ENCODE measurements at regions of chr3 and their contacts with region 1.

Region 1: GRCh38 chr3:152471814-152472671 is 203.3 kb downstream of the MBNL1 start:
- DNase-seq: peak; percentile 76
- H3K4me3 ChIP-seq: no peak overlapping the region
- H3K27ac ChIP-seq: peak overlapping the region; percentile 13
- H3K4me1 ChIP-seq: no peaks in the 10 kb centered on the region
- H3K27me3 ChIP-seq: no peaks in the 10 kb centered on the region
- CTCF ChIP-seq: peak; percentile 54 to 63
- POLR2A ChIP-seq: no peak

Region 2: GRCh38 chr3:152071924-152072323 is 400.1 kb before region 1 on chr3:
- CTCF ChIA-PET with region 1: interaction called, 19 read pairs
- POLR2A ChIA-PET with region 1: no interaction called
- dilution Hi-C with region 1: no loop called
- intact Hi-C with region 1: loop called (anchors 1 kb)
- DNase-seq: peak; percentile 50
- H3K4me3 ChIP-seq: no peak overlapping the region
- H3K27ac ChIP-seq: no peak overlapping the region
- H3K4me1 ChIP-seq: peaks cover 4% of the 10 kb centered on the region
- H3K27me3 ChIP-seq: no peaks in the 10 kb centered on the region
- CTCF ChIP-seq: peak; percentile 37 to 40
- POLR2A ChIP-seq: no peak

Region 3: GRCh38 chr3:152508705-152509104 is 36.7 kb after region 1 on chr3:
- CTCF ChIA-PET with region 1: interaction called, 11 read pairs
- POLR2A ChIA-PET with region 1: no interaction called
- dilution Hi-C with region 1: no loop called
- intact Hi-C with region 1: no loop called
- DNase-seq: peak; percentile 44
- H3K4me3 ChIP-seq: no peak overlapping the region
- H3K27ac ChIP-seq: no peak overlapping the region
- H3K4me1 ChIP-seq: peaks cover 3% of the 10 kb centered on the region
- H3K27me3 ChIP-seq: no peaks in the 10 kb centered on the region
- CTCF ChIP-seq: no peak
- POLR2A ChIP-seq: no peak

Region 4: DNA sequence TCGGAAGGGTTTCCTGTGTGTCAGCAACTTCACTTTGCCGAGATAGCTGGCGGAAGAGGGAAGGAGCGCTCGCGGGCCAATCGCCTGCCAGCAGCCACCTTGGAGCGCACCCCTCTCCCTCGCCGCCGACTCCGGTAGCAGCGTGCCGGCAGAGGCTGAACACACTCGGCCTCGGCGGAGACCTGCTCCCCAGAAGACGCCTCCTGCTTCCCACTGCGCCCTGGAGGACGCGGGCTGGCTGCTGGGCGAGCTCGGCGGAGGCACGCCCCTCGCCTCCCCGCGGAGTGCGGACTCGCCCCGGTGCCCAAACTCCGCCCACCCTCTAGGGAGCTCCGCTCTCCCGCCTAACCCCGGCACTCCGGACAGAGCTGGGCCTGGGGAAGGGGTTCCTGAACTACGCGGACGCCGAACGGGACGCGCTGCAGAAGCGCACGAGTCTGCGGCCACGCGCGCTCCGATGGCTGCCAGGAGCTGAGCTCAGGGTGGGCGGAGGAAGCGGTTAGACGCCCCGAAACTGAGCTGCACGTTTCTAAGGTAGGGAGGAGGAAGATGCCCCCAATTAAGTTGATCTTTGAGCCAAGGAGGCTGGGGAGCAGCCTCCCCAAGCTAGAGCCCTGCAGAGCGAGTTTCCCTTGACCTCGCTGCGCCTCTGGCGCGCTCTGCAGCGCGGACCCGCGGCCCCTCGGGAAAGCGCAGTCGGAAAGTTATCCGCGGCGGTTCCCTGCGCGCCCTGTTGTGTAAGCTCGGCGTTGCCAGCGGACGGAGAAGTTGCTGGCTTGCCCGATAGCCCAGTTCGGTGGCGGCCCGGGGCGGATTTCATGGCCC is 362.9 kb after region 1 on chr3 and contains the start of gene P2RY1:
- CTCF ChIA-PET with region 1: no interaction called
- POLR2A ChIA-PET with region 1: no interaction called
- dilution Hi-C with region 1: no loop called
- intact Hi-C with region 1: loop called (anchors 5 kb)
- DNase-seq: peak; percentile 59
- H3K4me3 ChIP-seq: peak within 1 kb of the TSS; percentile 51 to 77 (median 66)
- H3K27ac ChIP-seq: no peak within 1 kb of the TSS
- H3K4me1 ChIP-seq: peaks cover 6% of the 10 kb centered on the region
- H3K27me3 ChIP-seq: peaks cover 0 to 3% of the 10 kb centered on the region in 2 experiments
- CTCF ChIP-seq: peak; percentile 41 to 54
- POLR2A ChIP-seq: no peak
- total RNA-seq, gene P2RY1: 1.7 and 1.9 TPM in 2 replicates

Region 5: GRCh38 chr3:152961323-152961722 is 489.3 kb after region 1 on chr3:
- CTCF ChIA-PET with region 1: interaction called, 11 read pairs
- POLR2A ChIA-PET with region 1: no interaction called
- dilution Hi-C with region 1: no loop called
- intact Hi-C with region 1: loop called (anchors 1 kb)
- DNase-seq: peak; percentile 52
- H3K4me3 ChIP-seq: no peak overlapping the region
- H3K27ac ChIP-seq: no peak overlapping the region
- H3K4me1 ChIP-seq: peaks cover 9% of the 10 kb centered on the region
- H3K27me3 ChIP-seq: no peaks in the 10 kb centered on the region
- CTCF ChIP-seq: peak; percentile 10 to 48
- POLR2A ChIP-seq: no peak